Posterior cingulate gyrus (tissue), 11 donors: ENCODE measurements at regions of chr3 and their contacts with region 1.

Region 1: GRCh38 chr3:107927361-107928083 is 163.3 kb downstream of the CD47 start:
- DNase-seq: peak; percentile 74 to 98 (median 83)

Region 2: DNA sequence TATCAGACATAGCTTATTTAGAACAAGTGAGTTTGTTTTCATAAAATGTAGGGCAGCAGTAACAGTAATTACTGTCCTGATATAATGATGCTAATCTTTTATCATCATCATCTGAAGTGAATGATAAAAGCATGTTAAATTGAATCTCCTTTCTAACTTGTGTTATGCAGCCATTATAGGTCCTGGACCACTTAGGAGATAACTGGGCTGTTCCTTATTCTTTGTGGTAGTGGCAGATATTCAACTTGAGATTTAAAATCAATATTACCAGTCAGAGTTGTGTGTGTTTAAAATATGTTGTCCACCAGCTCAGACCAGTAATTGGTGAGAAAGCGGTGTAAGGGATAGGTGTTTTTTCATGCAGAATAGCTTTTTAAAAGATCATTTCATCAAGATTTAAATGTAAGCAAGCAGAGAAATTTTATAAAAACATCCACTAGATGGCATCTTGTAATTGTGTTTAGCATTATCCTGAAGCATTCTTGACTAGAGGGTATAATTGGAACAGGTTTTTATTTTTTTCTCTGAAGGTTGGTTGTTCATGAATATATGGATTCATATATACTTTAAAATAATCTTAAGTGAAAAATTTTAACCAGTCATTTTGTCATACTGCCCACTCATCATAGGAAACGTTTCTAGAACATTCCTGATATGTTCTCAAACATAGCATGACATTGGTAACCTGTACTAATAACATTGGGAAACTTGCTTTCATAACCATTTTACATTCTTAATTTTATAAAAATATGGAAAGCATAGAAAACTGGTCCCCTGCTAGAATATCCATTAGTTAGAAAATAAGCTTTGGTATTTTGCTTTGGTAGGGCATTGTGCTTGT is 250.8 kb before region 1 on chr3:
- intact Hi-C with region 1: loop called (anchors 10 kb)
- DNase-seq: no peak

Region 3: DNA sequence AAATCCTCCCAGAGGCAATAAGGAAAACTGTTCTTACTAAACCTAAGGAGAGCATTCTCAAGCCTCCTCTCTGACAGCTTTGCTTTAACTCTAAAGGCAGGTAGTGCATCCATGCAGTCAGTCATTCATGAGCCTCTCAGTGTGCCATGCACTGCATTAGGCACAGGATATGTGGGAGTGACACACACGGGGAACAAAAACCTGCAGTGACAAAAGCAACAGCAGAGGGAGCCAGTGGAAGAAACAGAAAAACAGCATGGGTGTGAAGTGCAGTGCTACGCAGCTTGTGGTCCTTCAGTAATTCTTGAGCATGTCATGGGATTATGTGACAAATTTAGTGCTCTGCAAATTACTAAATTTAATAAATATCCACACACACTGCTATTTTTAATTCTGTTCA is 174.0 kb before region 1 on chr3:
- intact Hi-C with region 1: loop called (anchors 5 kb)
- DNase-seq: peak in 8 of 10 donors; percentile 42 to 90 (median 58)

Region 4: GRCh38 chr3:107846279-107846852 is 81.2 kb before region 1 on chr3:
- intact Hi-C with region 1: loop called (anchors 10 kb)
- DNase-seq: peak in 9 of 10 donors; percentile 32 to 94 (median 70)

Region 5: GRCh38 chr3:108036984-108037741 is 109.6 kb after region 1 on chr3:
- intact Hi-C with region 1: no loop called
- DNase-seq: peak in 1 of 10 donors; percentile 19

Region 6: GRCh38 chr3:108090701-108091451 is 163.4 kb after region 1 on chr3 and contains the start of gene CD47:
- intact Hi-C with region 1: loop called (anchors 5 kb)
- DNase-seq: peak; percentile 90 to 99 (median 93)

Region 7: GRCh38 chr3:108271626-108272025 is 344.1 kb after region 1 on chr3:
- intact Hi-C with region 1: no loop called
- DNase-seq: no peak

Region 8: DNA sequence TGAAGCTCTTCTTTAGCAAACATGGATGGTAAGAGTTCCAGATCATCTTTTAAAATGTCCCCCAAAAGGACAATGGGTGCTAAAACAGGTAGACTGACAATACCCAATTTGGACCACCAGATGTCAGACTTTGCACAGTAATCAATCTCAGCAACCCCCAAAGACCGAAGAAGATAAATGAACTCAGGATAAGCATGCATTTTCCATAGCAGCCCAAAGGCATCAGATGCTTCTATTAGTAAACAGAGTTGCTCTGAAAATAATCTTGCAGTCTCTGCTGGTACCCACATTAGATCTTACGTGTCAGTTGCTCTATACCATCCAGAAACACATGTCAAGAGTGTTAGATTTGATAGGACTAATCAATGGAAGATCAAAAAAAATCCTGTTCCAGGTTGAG is 562.2 kb after region 1 on chr3:
- intact Hi-C with region 1: loop called (anchors 10 kb)
- DNase-seq: peak in 1 of 10 donors; percentile 33